ENCODE measurements at regions of chr12 and their contacts with region 1.

Region 1: GRCh38 chr12:64261813-64262212 is 39.7 kb upstream of the KICS2 start:
- DNase-seq: no peak
- H3K4me3 ChIP-seq: no peak overlapping the region
- CTCF ChIP-seq: no peak

Region 2: GRCh38 chr12:63826006-63826585 is 435.7 kb before region 1 on chr12:
- in situ Hi-C with region 1: loop called (anchors 5 kb)
- DNase-seq: peak; percentile 51
- H3K4me3 ChIP-seq: no peak overlapping the region
- CTCF ChIP-seq: peak; percentile 84

Region 3: DNA sequence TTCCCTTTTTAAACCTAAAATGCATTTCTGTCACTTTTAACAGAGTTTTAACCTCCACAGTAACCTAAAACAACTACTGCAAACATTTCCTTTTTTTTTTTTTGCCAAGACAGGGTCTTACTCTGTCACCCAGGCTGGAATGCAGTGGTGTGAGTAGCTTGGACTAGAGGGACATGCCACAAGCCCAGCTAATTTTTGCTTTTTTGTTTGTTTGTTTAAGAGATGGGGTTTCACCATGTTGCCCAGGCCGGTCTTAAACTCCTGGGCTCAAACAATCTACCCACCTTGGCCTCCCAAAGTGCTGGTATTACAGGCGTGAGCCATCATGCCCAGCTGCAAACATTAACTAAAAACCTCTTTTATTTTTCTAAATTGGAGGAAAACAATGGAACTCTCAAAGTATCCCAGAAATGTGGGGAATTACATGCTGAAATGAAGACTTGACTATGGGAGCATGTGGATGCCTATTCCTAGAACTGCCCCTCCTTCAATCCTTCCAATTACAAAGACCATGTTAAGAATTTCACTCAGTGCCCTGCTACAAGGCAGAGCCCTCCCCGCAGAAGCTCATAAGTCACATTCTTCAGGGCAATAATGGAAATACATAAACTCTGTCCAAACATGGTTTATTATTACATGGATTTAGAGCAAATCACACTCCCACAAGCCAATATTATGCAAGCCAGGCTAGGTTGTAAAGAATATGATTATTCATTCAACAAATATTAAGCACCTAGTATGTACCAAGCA is 61.8 kb after region 1 on chr12:
- in situ Hi-C with region 1: no loop called
- DNase-seq: no peak
- H3K4me3 ChIP-seq: no peak overlapping the region
- CTCF ChIP-seq: no peak

Measured in astrocyte of the cerebellum (primary cell).